MCF 10A (cell line): ENCODE measurements at regions of chr1 and their contacts with region 1.

Region 1: GRCh38 chr1:168342572-168343280 is 62.0 kb downstream of the TBX19 start:
- DNase-seq: peak; percentile 86
- H3K4me3 Mint-ChIP-seq: peak overlapping the region; percentile 37
- H3K27ac Mint-ChIP-seq: no peak overlapping the region
- H3K4me1 Mint-ChIP-seq: peaks cover 18% of the 10 kb centered on the region
- H3K27me3 Mint-ChIP-seq: no peaks in the 10 kb centered on the region
- CTCF ChIP-seq: peak; percentile 88

Region 2: DNA sequence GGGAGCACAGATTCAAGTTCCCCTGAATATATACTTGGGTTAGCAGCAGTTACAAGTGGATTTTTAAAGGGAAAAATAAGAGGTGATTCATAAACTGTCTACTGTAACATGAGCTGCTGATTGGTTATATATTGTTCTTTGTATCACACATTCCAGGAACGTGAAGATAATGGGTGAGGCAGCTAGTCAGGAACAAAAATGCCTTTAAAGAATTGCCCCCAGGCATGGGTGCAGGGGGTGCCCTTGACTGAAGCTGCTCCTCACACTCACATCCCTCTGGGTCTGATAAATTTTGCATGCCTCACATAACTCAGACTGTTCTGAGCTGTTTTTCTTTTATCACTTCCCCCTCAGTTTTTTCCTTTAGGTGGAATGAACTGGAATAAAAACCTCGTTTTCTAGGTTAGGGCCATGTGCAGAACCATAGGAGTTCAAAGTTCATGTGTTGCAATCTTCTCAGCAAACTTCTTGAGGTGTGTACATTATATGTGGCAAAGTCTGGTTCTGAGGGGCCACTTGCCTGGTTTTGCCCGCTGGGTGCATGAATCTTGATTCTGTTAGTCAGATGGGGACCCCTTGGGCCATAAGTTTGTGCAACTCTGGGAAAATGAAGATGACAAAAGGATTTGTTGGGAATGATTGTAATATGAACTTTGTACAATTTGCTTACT is 40.9 kb before region 1 on chr1:
- CTCF ChIA-PET with region 1: interaction called, 17 read pairs
- POLR2A ChIA-PET with region 1: interaction called, 4 read pairs
- intact Hi-C with region 1: no loop called
- DNase-seq: peak; percentile 88
- H3K4me3 Mint-ChIP-seq: no peak overlapping the region
- H3K27ac Mint-ChIP-seq: peak overlapping the region; percentile 78
- H3K4me1 Mint-ChIP-seq: peaks cover 37% of the 10 kb centered on the region
- H3K27me3 Mint-ChIP-seq: no peaks in the 10 kb centered on the region
- CTCF ChIP-seq: no peak

Region 3: DNA sequence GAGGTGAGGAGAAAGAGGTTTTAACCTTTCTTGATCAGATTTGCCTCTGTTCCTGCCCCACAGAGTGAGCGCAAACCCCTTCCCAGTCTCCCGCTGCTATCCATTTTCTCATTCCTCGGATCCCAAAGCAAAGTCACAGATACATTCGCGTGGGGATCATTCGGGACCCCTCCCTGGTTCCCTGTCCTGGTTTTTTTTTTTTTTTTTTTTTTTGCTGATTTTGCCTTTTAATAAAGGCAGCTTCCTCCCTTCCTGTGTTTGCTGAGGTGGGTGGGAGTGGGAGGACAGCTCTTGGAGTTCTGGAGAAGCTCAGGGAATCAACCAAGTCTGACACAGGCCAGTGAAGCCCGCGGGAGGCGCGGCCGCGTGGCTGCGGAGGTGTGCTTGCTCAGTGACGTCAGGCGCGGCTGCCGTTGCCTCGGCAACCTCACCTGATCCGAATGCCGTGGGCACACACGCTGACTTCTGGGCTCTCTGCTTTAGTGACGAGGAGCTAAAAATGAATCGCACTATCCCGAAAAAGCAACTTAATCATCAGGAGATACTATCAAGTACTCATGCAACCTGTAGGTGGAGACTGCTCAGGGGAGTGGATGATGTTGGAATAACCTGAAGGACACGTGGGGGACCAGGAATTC is 44.3 kb after region 1 on chr1:
- CTCF ChIA-PET with region 1: interaction called, 63 read pairs
- POLR2A ChIA-PET with region 1: no interaction called
- intact Hi-C with region 1: no loop called
- DNase-seq: peak; percentile 76
- H3K4me3 Mint-ChIP-seq: peak overlapping the region; percentile 53
- H3K27ac Mint-ChIP-seq: peak overlapping the region; percentile 80
- H3K4me1 Mint-ChIP-seq: peaks cover 23% of the 10 kb centered on the region
- H3K27me3 Mint-ChIP-seq: no peaks in the 10 kb centered on the region
- CTCF ChIP-seq: peak; percentile 16

Region 4: GRCh38 chr1:168446081-168446480 is 103.4 kb after region 1 on chr1:
- CTCF ChIA-PET with region 1: interaction called, 11 read pairs
- POLR2A ChIA-PET with region 1: no interaction called
- intact Hi-C with region 1: no loop called
- DNase-seq: no peak
- H3K4me3 Mint-ChIP-seq: no peak overlapping the region
- H3K27ac Mint-ChIP-seq: no peak overlapping the region
- H3K4me1 Mint-ChIP-seq: no peaks in the 10 kb centered on the region
- H3K27me3 Mint-ChIP-seq: peaks cover 22% of the 10 kb centered on the region
- CTCF ChIP-seq: no peak

Region 5: GRCh38 chr1:168567007-168567406 is 224.3 kb after region 1 on chr1:
- CTCF ChIA-PET with region 1: interaction called, 37 read pairs
- POLR2A ChIA-PET with region 1: interaction called, 3 read pairs
- intact Hi-C with region 1: no loop called
- DNase-seq: no peak
- H3K4me3 Mint-ChIP-seq: no peak overlapping the region
- H3K27ac Mint-ChIP-seq: no peak overlapping the region
- H3K4me1 Mint-ChIP-seq: no peaks in the 10 kb centered on the region
- H3K27me3 Mint-ChIP-seq: peaks cover 51% of the 10 kb centered on the region
- CTCF ChIP-seq: no peak

Region 6: GRCh38 chr1:168628807-168629206 is 286.1 kb after region 1 on chr1:
- CTCF ChIA-PET with region 1: interaction called, 13 read pairs
- POLR2A ChIA-PET with region 1: interaction called, 4 read pairs
- intact Hi-C with region 1: no loop called
- DNase-seq: peak; percentile 89
- H3K4me3 Mint-ChIP-seq: no peak overlapping the region
- H3K27ac Mint-ChIP-seq: peak overlapping the region; percentile 39
- H3K4me1 Mint-ChIP-seq: peaks cover 11% of the 10 kb centered on the region
- H3K27me3 Mint-ChIP-seq: no peaks in the 10 kb centered on the region
- CTCF ChIP-seq: no peak

Region 7: GRCh38 chr1:168752171-168752832 is 409.6 kb after region 1 on chr1:
- CTCF ChIA-PET with region 1: no interaction called
- POLR2A ChIA-PET with region 1: no interaction called
- intact Hi-C with region 1: no loop called
- DNase-seq: no peak
- H3K4me3 Mint-ChIP-seq: no peak overlapping the region
- H3K27ac Mint-ChIP-seq: no peak overlapping the region
- H3K4me1 Mint-ChIP-seq: peaks cover 10% of the 10 kb centered on the region
- H3K27me3 Mint-ChIP-seq: no peaks in the 10 kb centered on the region
- CTCF ChIP-seq: no peak